Prostate gland (tissue), 2 donors: ENCODE measurements at regions of chr17 and their contacts with region 1.

Region 1: DNA sequence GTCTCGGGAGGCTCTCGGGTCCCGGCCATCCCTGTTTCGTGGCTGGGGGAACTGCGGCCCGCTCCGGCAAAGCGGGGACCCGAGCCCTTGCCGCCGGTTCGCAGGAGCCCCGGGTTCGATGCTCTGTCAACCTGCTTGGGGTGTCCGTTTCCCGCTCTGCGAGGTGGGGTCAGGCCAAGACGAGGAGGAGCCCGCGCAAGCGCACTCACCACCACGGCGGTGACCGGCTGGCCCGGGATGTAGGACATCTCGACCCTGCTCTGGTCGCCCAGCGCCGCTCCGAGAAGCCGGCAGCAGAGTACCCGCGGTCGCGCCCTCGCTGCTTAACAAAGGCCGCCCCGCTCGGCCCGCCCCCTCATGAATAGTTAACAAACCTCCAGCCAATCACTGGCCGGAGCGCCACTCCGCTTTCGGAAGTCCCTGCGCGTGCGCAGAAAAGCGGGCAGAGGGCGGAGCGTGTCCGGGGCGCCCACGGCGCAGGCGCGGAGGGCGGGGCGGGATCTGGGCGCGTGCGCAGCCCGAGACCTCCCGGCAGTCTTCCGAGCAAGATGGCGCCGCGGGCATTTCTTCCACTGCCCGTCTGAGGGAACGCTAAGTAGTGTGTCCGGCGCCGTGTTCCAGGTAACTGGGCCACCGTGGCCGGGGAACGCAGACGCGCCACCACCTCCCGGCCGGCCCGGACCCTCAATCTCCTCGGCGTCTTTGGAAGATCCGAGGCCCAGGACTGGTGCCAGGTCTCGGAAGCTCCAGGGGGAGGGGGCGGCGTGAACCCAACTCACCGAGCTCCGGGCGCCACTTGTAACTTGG is at the starts of genes EMC6 and TAX1BP3:
- DNase-seq: peak; percentile 98
- H3K4me3 ChIP-seq: peak within 1 kb of the TSS; percentile 83 to 90
- H3K27ac ChIP-seq: peak within 1 kb of the TSS; percentile 92 to 95
- H3K4me1 ChIP-seq: peaks cover 13% of the 10 kb centered on the region
- H3K27me3 ChIP-seq: no peaks in the 10 kb centered on the region
- CTCF ChIP-seq: peak in 1 of 4 experiments; percentile 9
- POLR2A ChIP-seq: peak; percentile 95
- total RNA-seq, gene EMC6: 12.7 to 31.8 TPM
- total RNA-seq, gene TAX1BP3: 171 to 270 TPM

Region 2: GRCh38 chr17:2685696-2686095 is 982.8 kb before region 1 on chr17:
- intact Hi-C with region 1: no loop called
- DNase-seq: no peak
- H3K4me3 ChIP-seq: no peak overlapping the region
- H3K27ac ChIP-seq: no peak overlapping the region
- H3K4me1 ChIP-seq: peaks cover 5% of the 10 kb centered on the region
- H3K27me3 ChIP-seq: no peaks in the 10 kb centered on the region
- CTCF ChIP-seq: no peak
- POLR2A ChIP-seq: no peak

Region 3: GRCh38 chr17:3385869-3386816 is 282.3 kb before region 1 on chr17 and contains the start of gene OR3A2:
- intact Hi-C with region 1: no loop called
- DNase-seq: no peak
- H3K4me3 ChIP-seq: no peak within 1 kb of the TSS
- H3K27ac ChIP-seq: no peak within 1 kb of the TSS
- H3K4me1 ChIP-seq: no peaks in the 10 kb centered on the region
- H3K27me3 ChIP-seq: no peaks in the 10 kb centered on the region
- CTCF ChIP-seq: no peak
- POLR2A ChIP-seq: no peak
- total RNA-seq, gene OR3A2: 7.9 TPM in 1 of 2 donors, not detected in the other

Region 4: DNA sequence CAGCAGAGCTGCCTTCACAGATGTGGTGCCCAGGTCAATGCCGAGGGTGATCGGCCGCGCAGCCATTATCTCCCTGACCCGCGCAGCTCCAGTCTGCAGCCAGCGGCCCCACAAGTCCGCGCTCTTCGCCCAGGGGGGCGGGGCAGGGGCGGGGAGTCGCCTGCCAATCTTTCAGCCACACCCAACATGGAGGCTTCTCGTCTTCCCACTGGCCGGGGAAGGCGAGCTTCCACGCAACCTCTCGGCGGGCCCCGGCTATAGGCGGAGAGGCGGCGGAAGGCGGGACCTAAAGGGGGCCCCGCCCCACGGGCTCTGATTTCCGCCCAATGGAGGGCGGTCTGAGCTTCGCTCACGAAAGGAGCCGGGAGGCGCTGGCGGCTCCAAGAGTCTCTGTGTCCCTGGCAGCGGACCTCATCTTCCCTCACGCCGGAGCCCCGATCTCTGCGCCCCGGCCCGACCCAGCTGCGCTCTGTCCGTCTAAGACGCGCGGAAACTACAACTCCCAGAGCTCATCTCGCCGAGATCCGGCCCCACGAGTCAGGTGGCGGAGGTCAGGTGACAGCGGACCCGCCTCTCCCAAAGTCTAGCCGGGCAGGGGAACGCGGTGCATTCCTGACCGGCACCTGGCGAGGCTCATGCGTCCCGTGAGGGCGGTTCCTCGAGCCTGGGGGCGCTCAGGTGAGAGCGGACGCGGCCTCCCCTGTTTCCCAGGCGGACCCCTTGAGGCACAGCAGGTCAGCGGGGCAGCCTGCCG is 32.2 kb before region 1 on chr17 and contains the starts of genes CTNS and SHPK:
- intact Hi-C with region 1: loop called (anchors 1 kb)
- DNase-seq: peak; percentile 97
- H3K4me3 ChIP-seq: peak within 1 kb of the TSS; percentile 97 to 98
- H3K27ac ChIP-seq: peak within 1 kb of the TSS; percentile 96 to 99
- H3K4me1 ChIP-seq: no peaks in the 10 kb centered on the region
- H3K27me3 ChIP-seq: no peaks in the 10 kb centered on the region
- CTCF ChIP-seq: no peak
- POLR2A ChIP-seq: peak; percentile 91
- total RNA-seq, gene CTNS: 26.9 to 51.2 TPM
- total RNA-seq, gene SHPK: 13.6 to 25.5 TPM

Region 5: DNA sequence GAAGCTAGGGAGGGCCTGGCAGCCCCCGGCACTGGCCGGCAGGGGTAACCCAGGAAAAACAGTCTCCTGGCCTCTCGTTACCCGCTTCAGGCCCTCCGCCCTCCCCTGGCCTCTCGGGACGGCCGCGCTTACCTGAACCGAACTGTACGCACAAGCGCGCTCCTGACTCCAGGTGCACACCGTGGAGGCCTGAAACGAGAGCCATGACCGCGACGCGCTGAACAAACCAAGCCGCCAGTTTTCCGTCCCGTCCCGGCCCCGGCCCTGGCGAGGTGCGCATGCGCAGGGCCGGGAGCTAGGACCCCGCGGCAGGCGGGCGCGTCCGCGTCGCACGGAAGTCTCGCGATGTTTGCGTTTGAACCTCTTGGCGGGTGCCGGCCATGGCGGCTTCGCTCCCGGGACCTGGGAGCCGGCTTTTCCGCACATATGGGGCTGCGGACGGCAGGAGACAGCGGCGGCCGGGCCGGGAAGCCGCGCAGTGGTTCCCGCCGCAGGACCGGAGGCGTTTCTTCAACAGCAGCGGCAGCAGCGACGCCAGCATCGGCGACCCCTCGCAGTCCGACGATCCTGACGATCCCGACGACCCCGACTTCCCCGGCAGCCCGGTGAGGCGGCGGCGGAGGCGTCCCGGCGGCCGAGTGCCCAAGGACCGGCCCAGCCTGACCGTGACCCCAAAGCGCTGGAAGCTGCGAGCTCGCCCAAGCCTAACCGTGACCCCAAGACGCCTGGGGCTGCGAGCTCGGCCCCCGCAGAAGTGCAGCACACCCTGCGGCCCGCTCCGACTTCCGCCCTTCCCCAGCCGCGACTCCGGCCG is 55.3 kb after region 1 on chr17 and contains the start of gene HASPIN:
- intact Hi-C with region 1: loop called (anchors 2 kb)
- DNase-seq: peak; percentile 81
- H3K4me3 ChIP-seq: peak within 1 kb of the TSS; percentile 67 to 89
- H3K27ac ChIP-seq: peak within 1 kb of the TSS; percentile 81 to 90
- H3K4me1 ChIP-seq: peaks cover 2% of the 10 kb centered on the region
- H3K27me3 ChIP-seq: no peaks in the 10 kb centered on the region
- CTCF ChIP-seq: peak in 2 of 4 experiments; percentile 35 to 36
- POLR2A ChIP-seq: peak; percentile 68
- total RNA-seq, gene HASPIN: 1.0 to 3.9 TPM

Region 6: GRCh38 chr17:3913531-3914311 is 245.2 kb after region 1 on chr17:
- intact Hi-C with region 1: no loop called
- DNase-seq: peak; percentile 63
- H3K4me3 ChIP-seq: no peak overlapping the region
- H3K27ac ChIP-seq: no peak overlapping the region
- H3K4me1 ChIP-seq: no peaks in the 10 kb centered on the region
- H3K27me3 ChIP-seq: no peaks in the 10 kb centered on the region
- CTCF ChIP-seq: peak; percentile 82 to 95 (median 89)
- POLR2A ChIP-seq: no peak

Region 7: GRCh38 chr17:4782652-4783051 is 1114.2 kb after region 1 on chr17:
- intact Hi-C with region 1: no loop called
- DNase-seq: no peak
- H3K4me3 ChIP-seq: no peak overlapping the region
- H3K27ac ChIP-seq: no peak overlapping the region
- H3K4me1 ChIP-seq: peaks cover 4% of the 10 kb centered on the region
- H3K27me3 ChIP-seq: peaks cover 1% of the 10 kb centered on the region
- CTCF ChIP-seq: no peak
- POLR2A ChIP-seq: no peak